ENCODE measurements at regions of chr10 and their contacts with region 1.

Region 1: DNA sequence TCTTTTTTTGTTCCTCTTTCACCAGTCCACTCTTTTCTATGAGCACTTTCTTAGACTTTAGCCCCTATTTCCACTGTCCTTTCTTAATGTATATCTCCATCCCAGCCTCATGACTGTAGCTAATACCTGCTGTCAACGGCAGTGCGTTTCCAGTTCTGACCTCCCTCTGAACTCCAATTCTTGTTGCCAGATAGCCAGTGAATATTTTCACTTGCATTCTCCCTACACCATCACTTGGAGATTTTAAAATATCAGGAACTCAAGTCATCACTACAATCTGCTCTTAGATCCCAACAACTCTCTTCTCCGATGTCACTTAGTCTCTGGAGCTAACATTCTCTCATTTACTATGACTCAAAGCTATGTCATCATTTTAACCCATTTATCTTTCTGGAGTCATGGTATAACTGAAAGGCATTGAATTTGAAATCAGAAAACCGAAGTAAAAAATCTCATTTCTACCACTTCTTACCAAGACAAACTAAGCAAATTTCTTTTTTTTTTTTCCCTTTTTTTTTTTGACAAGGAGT is 5.1 kb upstream of the SLC16A12 start:
- DNase-seq: no peak
- H3K4me3 ChIP-seq: no peak overlapping the region
- H3K27ac ChIP-seq: no peak overlapping the region
- H3K27me3 ChIP-seq: no peaks in the 10 kb centered on the region
- CTCF ChIP-seq: no peak

Region 2: DNA sequence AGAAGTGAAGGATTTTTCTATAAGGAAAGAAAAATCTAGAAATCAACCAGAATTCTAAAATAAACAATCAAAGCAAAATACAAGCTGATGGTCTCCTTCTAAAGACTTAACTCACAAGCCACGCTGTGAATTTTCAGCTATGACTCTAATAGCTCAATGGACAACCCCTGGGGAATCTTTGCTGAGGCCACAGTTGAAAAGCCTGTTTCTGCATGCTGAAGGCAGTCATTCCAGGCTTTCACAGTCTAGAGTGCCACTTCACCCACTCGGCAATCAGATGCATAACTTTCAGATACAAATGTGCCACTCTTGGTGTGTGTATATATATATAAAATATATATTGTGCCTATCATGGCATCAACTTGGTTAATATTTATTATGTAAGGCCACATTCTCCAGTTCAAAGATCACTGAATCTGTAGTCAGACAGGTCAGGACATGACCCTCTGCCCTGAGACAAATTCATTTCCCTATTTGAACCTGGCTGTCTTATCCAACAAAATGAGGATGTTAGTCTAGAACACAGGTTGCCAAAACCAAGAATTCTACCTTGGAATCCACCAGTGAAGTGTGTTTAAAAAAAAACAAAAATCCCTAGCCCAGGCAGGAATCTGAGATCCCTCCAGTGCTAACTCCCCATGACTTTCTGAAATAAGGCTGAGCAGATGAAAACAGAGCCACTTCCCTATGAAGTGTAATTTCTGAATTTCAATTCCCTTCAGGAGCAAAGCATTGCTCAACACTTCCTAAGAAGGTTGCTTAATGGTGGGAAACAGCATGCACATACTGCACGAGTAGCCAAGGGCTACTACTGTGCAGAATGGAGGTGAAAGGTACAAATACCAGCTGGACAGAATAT is 298.8 kb before region 1 on chr10:
- CTCF ChIA-PET with region 1: no interaction called
- POLR2A ChIA-PET with region 1: no interaction called
- DNase-seq: no peak
- H3K4me3 ChIP-seq: no peak overlapping the region
- H3K27ac ChIP-seq: no peak overlapping the region
- H3K27me3 ChIP-seq: no peaks in the 10 kb centered on the region
- CTCF ChIP-seq: no peak

Region 3: GRCh38 chr10:89553064-89553734 is 12.7 kb after region 1 on chr10:
- CTCF ChIA-PET with region 1: no interaction called
- POLR2A ChIA-PET with region 1: interaction called, 10 read pairs
- DNase-seq: peak; percentile 63
- H3K4me3 ChIP-seq: no peak overlapping the region
- H3K27ac ChIP-seq: no peak overlapping the region
- H3K27me3 ChIP-seq: no peaks in the 10 kb centered on the region
- CTCF ChIP-seq: no peak

Measured in AG04450 (cell line).